Activated naive CD4-positive, alpha-beta T cell treated with anti-CD3 and anti-CD28 coated beads for 36 hours (primary cell): ENCODE measurements at regions of chr16 and their contacts with region 1.

Region 1: DNA sequence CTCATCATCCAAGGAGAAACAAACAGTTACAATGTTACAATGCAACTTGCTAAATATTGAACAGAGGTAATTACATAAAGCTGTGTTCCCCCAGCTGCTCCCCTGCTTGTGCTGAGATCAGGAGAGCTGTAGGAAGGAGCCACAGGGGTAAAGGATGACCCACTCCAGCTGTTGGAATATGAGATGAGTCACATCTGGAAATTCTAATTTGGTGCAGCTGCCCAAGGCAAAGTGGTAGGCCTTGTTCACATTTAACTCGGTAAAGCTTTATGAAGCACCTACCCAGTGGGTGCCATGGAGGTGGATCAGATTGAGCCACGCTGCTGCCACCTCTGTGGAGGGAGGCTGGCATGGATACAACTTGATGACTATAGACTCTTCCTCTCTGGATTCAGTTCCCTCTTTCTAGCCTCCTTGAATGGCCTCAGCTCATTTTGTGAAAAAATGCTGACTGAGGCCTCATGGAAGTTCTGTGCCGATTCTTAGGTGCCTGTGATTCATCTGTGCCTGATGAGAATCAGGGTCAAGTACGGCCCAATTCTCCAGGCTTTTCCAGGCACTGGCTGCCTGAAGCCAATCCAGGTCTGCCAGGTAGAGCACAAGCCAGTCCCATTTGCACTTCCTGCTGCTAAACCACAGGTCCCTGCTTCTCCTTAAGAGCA is 7.4 kb downstream of the ZNF689 start:
- DNase-seq: no peak
- H3K4me3 Mint-ChIP-seq: no peak overlapping the region
- H3K27ac Mint-ChIP-seq: no peak overlapping the region
- H3K4me1 Mint-ChIP-seq: peaks cover 10% of the 10 kb centered on the region
- H3K27me3 Mint-ChIP-seq: no peaks in the 10 kb centered on the region

Region 2: GRCh38 chr16:30519120-30520049 is 83.4 kb before region 1 on chr16:
- CTCF ChIA-PET with region 1: interaction called, 10 read pairs
- intact Hi-C with region 1: no loop called
- DNase-seq: no peak
- H3K4me3 Mint-ChIP-seq: no peak overlapping the region
- H3K27ac Mint-ChIP-seq: peak overlapping the region; percentile 13
- H3K4me1 Mint-ChIP-seq: no peaks in the 10 kb centered on the region
- H3K27me3 Mint-ChIP-seq: no peaks in the 10 kb centered on the region

Region 3: GRCh38 chr16:30526823-30527635 is 75.7 kb before region 1 on chr16:
- CTCF ChIA-PET with region 1: interaction called, 9 read pairs
- intact Hi-C with region 1: loop called (anchors 1 kb)
- DNase-seq: peak; percentile 97
- H3K4me3 Mint-ChIP-seq: peak overlapping the region; percentile 72
- H3K27ac Mint-ChIP-seq: peak overlapping the region; percentile 75
- H3K4me1 Mint-ChIP-seq: peaks cover 36% of the 10 kb centered on the region
- H3K27me3 Mint-ChIP-seq: no peaks in the 10 kb centered on the region

Region 4: GRCh38 chr16:30615358-30616091 is 12.8 kb after region 1 on chr16:
- CTCF ChIA-PET with region 1: interaction called, 25 read pairs
- intact Hi-C with region 1: no loop called
- DNase-seq: peak; percentile 91
- H3K4me3 Mint-ChIP-seq: no peak overlapping the region
- H3K27ac Mint-ChIP-seq: no peak overlapping the region
- H3K4me1 Mint-ChIP-seq: peaks cover 3% of the 10 kb centered on the region
- H3K27me3 Mint-ChIP-seq: no peaks in the 10 kb centered on the region